CD4-positive, alpha-beta T cell (primary cell): ENCODE measurements at regions of chr10 and their contacts with region 1.

Region 1: GRCh38 chr10:102641880-102642735 is 2.2 kb upstream of the TRIM8 start:
- DNase-seq: peak; percentile 94 to 100 (median 98)
- ATAC-seq: peak; percentile 70
- H3K4me3 ChIP-seq: peak overlapping the region; percentile 75
- H3K4me3 Mint-ChIP-seq: peak overlapping the region; percentile 96
- H3K27ac ChIP-seq: peak overlapping the region; percentile 95 to 96
- H3K27ac Mint-ChIP-seq: peak overlapping the region; percentile 95
- H3K4me1 ChIP-seq: peaks cover 28% of the 10 kb centered on the region
- H3K4me1 Mint-ChIP-seq: peaks cover 31% of the 10 kb centered on the region
- H3K27me3 ChIP-seq: no peaks in the 10 kb centered on the region
- H3K27me3 Mint-ChIP-seq: no peaks in the 10 kb centered on the region
- CTCF ChIP-seq: no peak

Region 2: DNA sequence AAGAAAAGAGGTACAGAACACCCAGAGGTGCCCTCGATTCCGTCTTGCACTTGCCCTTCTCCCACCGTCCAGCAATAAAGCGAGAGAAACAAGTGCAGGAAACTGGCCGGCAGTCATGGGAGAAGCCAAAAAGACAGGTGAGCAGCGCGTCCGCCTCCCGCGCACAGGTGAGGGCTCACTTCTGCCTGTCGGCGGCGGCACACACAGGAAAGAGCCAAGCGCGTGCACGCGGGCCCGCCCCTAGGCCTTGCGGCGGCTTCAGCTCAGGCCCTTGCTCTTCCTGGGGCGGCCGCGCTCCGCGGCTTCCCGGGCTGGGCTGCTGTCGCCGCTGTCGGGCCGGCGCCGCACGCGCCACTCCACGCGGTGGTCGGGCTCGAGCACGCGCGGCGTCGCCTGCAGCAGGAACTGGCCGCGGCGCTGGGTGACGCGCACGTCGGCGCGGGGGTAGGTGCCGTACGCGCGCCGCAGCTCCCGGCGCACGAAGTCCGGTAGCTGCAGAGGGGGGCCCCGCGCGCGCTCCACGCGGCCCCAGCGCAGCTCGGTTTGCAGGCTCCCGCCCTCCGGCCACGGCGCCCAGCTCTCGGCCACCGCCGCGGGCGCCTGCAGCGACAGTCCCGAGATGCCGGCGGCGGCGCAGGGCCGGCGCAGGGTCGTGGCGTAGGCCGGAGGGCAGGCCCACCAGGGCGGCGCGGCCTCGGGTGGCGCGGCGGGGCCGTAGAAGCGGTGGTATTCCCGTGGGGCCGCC is 191.7 kb before region 1 on chr10:
- CTCF ChIA-PET with region 1: no interaction called
- POLR2A ChIA-PET with region 1: interaction called, 10 read pairs
- intact Hi-C with region 1: no loop called
- DNase-seq: peak; percentile 78 to 98 (median 88)
- ATAC-seq: peak; percentile 77
- H3K4me3 ChIP-seq: peak overlapping the region; percentile 83
- H3K4me3 Mint-ChIP-seq: peak overlapping the region; percentile 94
- H3K27ac ChIP-seq: peak overlapping the region; percentile 79 to 80
- H3K27ac Mint-ChIP-seq: peak overlapping the region; percentile 78
- H3K4me1 ChIP-seq: peaks cover 41% of the 10 kb centered on the region
- H3K4me1 Mint-ChIP-seq: peaks cover 21% of the 10 kb centered on the region
- H3K27me3 ChIP-seq: no peaks in the 10 kb centered on the region
- H3K27me3 Mint-ChIP-seq: no peaks in the 10 kb centered on the region
- CTCF ChIP-seq: no peak

Region 3: DNA sequence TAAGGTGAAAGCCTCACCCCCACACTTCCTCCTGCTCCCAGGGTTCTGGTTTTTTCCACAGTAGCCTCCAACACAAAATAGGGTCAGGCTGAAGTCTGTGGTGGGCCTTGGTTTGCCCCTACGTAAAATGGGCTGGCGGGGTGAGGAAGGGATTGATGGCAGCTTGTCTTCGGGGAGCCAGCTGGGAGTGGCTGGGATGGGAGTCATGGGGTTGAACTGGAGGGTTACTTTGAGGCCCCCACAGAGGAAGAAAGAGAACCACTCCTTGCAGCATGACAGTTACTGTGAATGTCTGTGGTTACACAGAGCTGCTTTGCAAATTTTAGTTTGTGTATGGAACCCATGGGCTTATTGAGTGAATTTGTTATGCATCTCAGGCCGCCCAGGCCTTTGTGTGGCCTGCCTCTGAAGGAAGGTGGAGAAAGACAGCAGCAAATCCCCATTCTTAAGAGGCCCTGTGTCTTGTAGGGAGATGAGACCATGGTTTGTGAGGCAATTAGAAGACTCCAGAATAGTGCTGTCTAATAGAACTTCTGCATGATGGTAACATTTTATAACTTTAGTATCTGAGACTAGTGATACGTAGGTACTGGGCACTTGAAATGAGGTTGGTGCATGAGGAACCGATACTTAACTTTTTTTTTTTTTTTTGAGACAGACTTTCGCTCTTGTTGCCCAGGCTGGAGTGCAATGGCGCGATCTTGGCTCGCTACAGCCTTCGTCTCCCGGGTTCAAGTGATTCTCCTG is 10.2 kb after region 1 on chr10:
- CTCF ChIA-PET with region 1: interaction called, 5 read pairs
- POLR2A ChIA-PET with region 1: interaction called, 121 read pairs
- intact Hi-C with region 1: no loop called
- DNase-seq: peak in 1 of 14 experiments; percentile 10
- ATAC-seq: no peak
- H3K4me3 ChIP-seq: no peak overlapping the region
- H3K4me3 Mint-ChIP-seq: peak overlapping the region; percentile 69
- H3K27ac ChIP-seq: peak overlapping the region; percentile 52 to 66
- H3K27ac Mint-ChIP-seq: peak overlapping the region; percentile 97
- H3K4me1 ChIP-seq: peaks cover 67% of the 10 kb centered on the region
- H3K4me1 Mint-ChIP-seq: peaks cover 70% of the 10 kb centered on the region
- H3K27me3 ChIP-seq: no peaks in the 10 kb centered on the region
- H3K27me3 Mint-ChIP-seq: no peaks in the 10 kb centered on the region
- CTCF ChIP-seq: no peak

Region 4: GRCh38 chr10:102669206-102670064 is 27.3 kb after region 1 on chr10:
- CTCF ChIA-PET with region 1: interaction called, 30 read pairs
- POLR2A ChIA-PET with region 1: interaction called, 134 read pairs
- intact Hi-C with region 1: loop called (anchors 2 kb)
- DNase-seq: peak in 1 of 14 experiments; percentile 55
- ATAC-seq: no peak
- H3K4me3 ChIP-seq: no peak overlapping the region
- H3K4me3 Mint-ChIP-seq: no peak overlapping the region
- H3K27ac ChIP-seq: no peak overlapping the region
- H3K27ac Mint-ChIP-seq: peak overlapping the region; percentile 12
- H3K4me1 ChIP-seq: peaks cover 49% of the 10 kb centered on the region
- H3K4me1 Mint-ChIP-seq: peaks cover 46% of the 10 kb centered on the region
- H3K27me3 ChIP-seq: no peaks in the 10 kb centered on the region
- H3K27me3 Mint-ChIP-seq: no peaks in the 10 kb centered on the region
- CTCF ChIP-seq: peak; percentile 27

Region 5: GRCh38 chr10:102713814-102714620 is 71.9 kb after region 1 on chr10 and contains the start of gene ARL3:
- CTCF ChIA-PET with region 1: interaction called, 28 read pairs
- POLR2A ChIA-PET with region 1: interaction called, 91 read pairs
- intact Hi-C with region 1: loop called (anchors 2 kb)
- DNase-seq: peak; percentile 82 to 98 (median 92)
- ATAC-seq: peak; percentile 89
- H3K4me3 ChIP-seq: peak within 1 kb of the TSS; percentile 98
- H3K4me3 Mint-ChIP-seq: peak within 1 kb of the TSS; percentile 93
- H3K27ac ChIP-seq: peak within 1 kb of the TSS; percentile 84 to 86
- H3K27ac Mint-ChIP-seq: peak within 1 kb of the TSS; percentile 81
- H3K4me1 ChIP-seq: peaks cover 34% of the 10 kb centered on the region
- H3K4me1 Mint-ChIP-seq: peaks cover 61% of the 10 kb centered on the region
- H3K27me3 ChIP-seq: no peaks in the 10 kb centered on the region
- H3K27me3 Mint-ChIP-seq: no peaks in the 10 kb centered on the region
- CTCF ChIP-seq: peak; percentile 46
- total RNA-seq, gene ARL3: 0.99 to 1.3 TPM